ENCODE measurements at regions of chr1 and their contacts with region 1.

Region 1: DNA sequence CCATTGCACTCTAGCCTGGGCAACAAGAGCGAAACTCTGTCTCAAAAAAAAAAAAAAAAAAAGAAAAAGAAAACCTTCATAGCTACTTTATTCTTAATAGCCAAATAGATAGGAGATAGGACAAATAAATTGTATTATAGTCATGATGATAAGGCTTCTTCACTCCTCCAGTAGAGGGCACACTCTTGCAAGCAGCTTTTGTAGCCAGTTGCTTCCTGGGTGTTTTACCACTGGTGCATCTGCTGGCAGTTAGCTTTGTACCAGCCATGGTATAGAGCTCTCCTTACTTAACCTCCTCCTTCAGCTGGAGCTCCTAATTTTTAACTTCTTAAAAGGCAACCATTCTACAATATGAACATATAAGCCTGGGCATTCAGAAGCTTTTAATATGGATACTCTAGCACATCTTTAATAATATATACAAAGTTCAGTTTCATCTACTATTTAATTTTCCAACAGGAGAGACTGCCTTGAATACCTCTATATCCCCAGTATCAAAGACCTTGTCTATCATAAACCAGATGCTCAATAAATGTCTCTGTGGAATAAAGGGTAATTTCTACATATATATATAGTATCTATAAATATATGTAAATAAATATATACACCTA is 35.8 kb downstream of the EVI5 start:
- DNase-seq: peak; percentile 36
- H3K4me3 Mint-ChIP-seq: no peak overlapping the region
- H3K27ac Mint-ChIP-seq: no peak overlapping the region
- H3K4me1 Mint-ChIP-seq: no peaks in the 10 kb centered on the region
- H3K27me3 Mint-ChIP-seq: peaks cover 4% of the 10 kb centered on the region

Region 2: GRCh38 chr1:92792340-92792782 is 43.2 kb after region 1 on chr1:
- CTCF ChIA-PET with region 1: interaction called, 15 read pairs
- POLR2A ChIA-PET with region 1: no interaction called
- intact Hi-C with region 1: no loop called
- DNase-seq: no peak
- H3K4me3 Mint-ChIP-seq: no peak overlapping the region
- H3K27ac Mint-ChIP-seq: no peak overlapping the region
- H3K4me1 Mint-ChIP-seq: peaks cover 3% of the 10 kb centered on the region
- H3K27me3 Mint-ChIP-seq: peaks cover 22% of the 10 kb centered on the region